Prostate gland (tissue), 2 donors: ENCODE measurements at regions of chr19 and their contacts with region 1.

Region 1: GRCh38 chr19:48271531-48272151 is 1.8 kb downstream of the ZNF114 start:
- DNase-seq: no peak
- H3K4me3 ChIP-seq: peak overlapping the region; percentile 22 to 27
- H3K27ac ChIP-seq: no peak overlapping the region
- H3K4me1 ChIP-seq: no peaks in the 10 kb centered on the region
- H3K27me3 ChIP-seq: no peaks in the 10 kb centered on the region
- CTCF ChIP-seq: no peak
- POLR2A ChIP-seq: no peak

Region 2: DNA sequence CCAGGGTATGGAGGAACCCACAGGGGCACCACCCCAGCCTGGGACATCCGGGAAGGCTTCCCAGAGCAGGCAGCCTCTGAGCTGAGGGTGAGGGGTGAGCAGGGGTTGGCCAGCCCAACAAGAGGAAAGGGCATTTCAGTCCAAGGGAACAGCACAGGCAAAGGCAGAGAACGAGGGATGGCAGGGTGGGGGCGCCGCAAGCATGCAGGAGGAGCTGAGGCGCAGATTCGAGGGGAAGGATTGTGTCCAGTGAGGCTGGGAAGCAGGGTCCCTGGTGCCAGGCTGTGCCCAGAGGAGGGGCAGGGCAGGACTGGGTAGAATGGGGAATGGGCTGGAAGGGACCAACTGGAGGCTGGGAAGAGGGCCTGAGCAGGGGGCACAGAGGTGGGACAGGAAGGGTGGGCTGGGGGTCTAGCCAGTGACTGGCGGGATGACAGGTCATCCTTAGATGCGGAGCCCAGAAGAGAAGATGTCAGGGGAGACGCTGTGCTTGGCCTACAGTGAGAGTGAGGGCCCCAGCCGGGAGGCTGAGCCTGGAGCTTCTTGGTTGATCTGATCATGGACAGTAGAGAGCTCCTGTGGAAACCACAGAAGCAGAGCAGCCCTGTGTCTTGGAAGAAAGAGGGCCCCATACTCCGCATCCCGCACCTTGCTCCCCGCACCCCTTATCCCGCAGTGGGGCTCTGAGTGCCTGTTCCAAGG is 67.3 kb after region 1 on chr19:
- intact Hi-C with region 1: loop called (anchors 5 kb)
- DNase-seq: no peak
- H3K4me3 ChIP-seq: no peak overlapping the region
- H3K27ac ChIP-seq: no peak overlapping the region
- H3K4me1 ChIP-seq: no peaks in the 10 kb centered on the region
- H3K27me3 ChIP-seq: no peaks in the 10 kb centered on the region
- CTCF ChIP-seq: no peak
- POLR2A ChIP-seq: no peak

Region 3: DNA sequence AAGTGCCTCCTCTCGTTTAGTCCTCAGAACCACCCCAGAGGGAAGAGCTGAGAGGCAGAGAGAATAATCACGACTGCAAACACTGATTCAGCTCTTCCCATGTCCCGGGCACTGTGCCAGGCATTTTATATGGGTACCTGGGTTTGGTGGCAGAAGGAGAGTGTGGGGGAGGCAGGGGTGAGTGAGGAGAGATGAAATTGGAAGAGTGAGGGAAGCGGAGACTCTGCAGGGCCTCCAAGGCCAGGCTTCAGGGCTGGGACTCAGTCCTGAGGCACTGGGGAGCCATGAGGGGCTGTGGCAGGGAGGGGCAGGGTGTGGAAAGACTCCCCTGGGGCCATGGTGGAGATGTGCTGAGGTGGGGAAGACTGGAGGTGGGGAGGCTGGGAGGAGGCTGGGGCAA is 101.3 kb after region 1 on chr19:
- intact Hi-C with region 1: no loop called
- DNase-seq: peak; percentile 72
- H3K4me3 ChIP-seq: no peak overlapping the region
- H3K27ac ChIP-seq: no peak overlapping the region
- H3K4me1 ChIP-seq: no peaks in the 10 kb centered on the region
- H3K27me3 ChIP-seq: no peaks in the 10 kb centered on the region
- CTCF ChIP-seq: no peak
- POLR2A ChIP-seq: no peak